MCF 10A (cell line): ENCODE measurements at regions of chr6 and their contacts with region 1.

Region 1: DNA sequence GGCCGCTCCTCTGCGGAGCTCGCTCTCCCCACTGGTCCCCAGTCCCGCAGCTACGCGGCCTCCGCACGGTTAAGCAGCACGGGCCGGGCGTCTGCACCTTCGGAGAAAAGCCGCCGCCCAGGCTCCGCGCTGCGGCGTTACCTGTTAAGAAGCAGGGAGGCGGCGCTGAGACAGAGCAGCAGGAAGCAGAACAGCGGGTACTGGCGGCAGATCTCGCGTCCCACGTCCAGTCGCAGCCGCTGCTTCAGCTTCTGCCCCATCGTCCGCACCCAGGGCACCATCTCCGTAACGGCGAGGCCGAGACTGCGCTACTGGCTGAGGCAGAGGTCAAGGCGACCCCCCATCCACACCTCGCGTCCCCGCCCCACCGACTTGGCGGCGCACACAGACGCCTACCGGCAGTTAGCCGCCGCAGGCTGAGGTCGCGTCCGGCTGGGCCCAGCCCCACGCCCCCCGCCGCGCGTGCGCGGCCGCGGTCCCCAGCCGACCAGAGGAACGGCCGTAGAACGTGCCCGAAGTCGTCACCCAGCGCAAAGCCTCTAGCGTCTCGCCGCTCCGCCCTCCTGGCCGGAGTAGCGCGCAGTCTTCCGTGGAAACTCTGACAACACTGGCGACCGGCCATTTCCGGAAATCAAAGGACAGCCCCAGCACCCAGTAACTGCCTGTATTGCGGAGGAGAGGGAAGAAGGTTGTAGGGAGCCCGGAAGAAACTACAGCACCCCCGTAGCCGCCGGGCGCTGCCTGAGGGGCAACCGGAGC is at the start of gene SNX14:
- DNase-seq: peak; percentile 96
- H3K4me3 Mint-ChIP-seq: peak within 1 kb of the TSS; percentile 91
- H3K27ac Mint-ChIP-seq: peak within 1 kb of the TSS; percentile 98
- H3K4me1 Mint-ChIP-seq: peaks cover 19% of the 10 kb centered on the region
- H3K27me3 Mint-ChIP-seq: no peaks in the 10 kb centered on the region
- CTCF ChIP-seq: no peak
- total RNA-seq, gene SNX14: 71.3 and 71.6 TPM in 2 replicates

Region 2: GRCh38 chr6:85360794-85361642 is 232.6 kb before region 1 on chr6:
- CTCF ChIA-PET with region 1: no interaction called
- POLR2A ChIA-PET with region 1: interaction called, 10 read pairs
- intact Hi-C with region 1: no loop called
- DNase-seq: peak; percentile 94
- H3K4me3 Mint-ChIP-seq: no peak overlapping the region
- H3K27ac Mint-ChIP-seq: peak overlapping the region; percentile 93
- H3K4me1 Mint-ChIP-seq: peaks cover 22% of the 10 kb centered on the region
- H3K27me3 Mint-ChIP-seq: no peaks in the 10 kb centered on the region
- CTCF ChIP-seq: no peak

Region 3: GRCh38 chr6:85404502-85405174 is 189.0 kb before region 1 on chr6:
- CTCF ChIA-PET with region 1: no interaction called
- POLR2A ChIA-PET with region 1: no interaction called
- intact Hi-C with region 1: loop called (anchors 5 kb)
- DNase-seq: peak; percentile 92
- H3K4me3 Mint-ChIP-seq: peak overlapping the region; percentile 48
- H3K27ac Mint-ChIP-seq: peak overlapping the region; percentile 93
- H3K4me1 Mint-ChIP-seq: peaks cover 49% of the 10 kb centered on the region
- H3K27me3 Mint-ChIP-seq: no peaks in the 10 kb centered on the region
- CTCF ChIP-seq: no peak

Region 4: DNA sequence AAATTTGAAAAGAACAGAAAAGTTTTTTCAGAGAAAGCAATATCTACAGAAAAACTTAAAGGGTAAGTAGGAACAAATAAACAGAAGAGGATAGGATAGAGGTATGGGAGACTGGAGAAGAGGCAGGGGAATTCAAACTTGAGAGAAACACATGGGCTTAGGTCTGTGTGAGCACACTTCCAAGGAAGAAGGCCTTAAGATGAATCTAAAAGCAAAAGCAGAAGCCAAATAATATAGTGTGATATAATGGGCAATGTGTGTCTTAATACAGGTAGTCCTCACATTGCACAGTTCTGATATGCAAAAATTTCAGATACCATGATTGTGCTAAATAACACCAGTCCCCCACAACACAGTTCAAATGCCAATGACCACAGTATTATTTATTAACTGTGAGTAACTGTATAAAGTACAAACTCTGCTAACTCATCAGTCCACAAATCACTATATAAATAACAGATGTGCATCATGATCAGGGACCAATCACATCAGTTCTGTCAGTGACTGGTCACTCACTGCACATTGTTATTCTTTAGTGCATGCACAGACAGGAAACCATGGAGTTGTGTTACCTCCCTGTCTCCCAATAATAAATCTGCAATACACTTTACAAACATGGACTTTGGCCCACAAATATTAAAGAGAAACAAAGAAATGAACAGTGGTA is 18.6 kb before region 1 on chr6:
- CTCF ChIA-PET with region 1: interaction called, 3 read pairs
- POLR2A ChIA-PET with region 1: interaction called, 23 read pairs
- intact Hi-C with region 1: no loop called
- DNase-seq: peak; percentile 56
- H3K4me3 Mint-ChIP-seq: no peak overlapping the region
- H3K27ac Mint-ChIP-seq: peak overlapping the region; percentile 77
- H3K4me1 Mint-ChIP-seq: peaks cover 23% of the 10 kb centered on the region
- H3K27me3 Mint-ChIP-seq: no peaks in the 10 kb centered on the region
- CTCF ChIP-seq: no peak

Region 5: DNA sequence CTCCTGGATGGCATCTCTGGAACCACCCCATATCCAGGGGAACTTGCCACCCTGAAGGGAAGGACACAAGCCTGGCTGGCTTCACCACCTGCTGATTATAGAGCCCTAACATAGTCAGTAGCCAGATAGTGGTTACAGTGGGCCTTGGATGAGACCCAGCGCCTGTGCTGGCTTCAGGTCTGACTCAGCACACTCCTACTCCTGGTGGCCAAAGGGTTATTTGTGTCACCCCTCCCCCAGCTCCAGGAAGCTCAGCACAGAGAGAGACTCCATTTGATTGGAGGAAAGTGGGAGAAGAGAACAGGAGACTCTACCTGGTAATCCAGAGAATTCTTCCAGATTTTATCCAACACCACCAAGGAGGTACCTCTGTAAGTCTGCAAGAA is 12.7 kb before region 1 on chr6:
- CTCF ChIA-PET with region 1: interaction called, 3 read pairs
- POLR2A ChIA-PET with region 1: interaction called, 23 read pairs
- intact Hi-C with region 1: no loop called
- DNase-seq: peak; percentile 77
- H3K4me3 Mint-ChIP-seq: no peak overlapping the region
- H3K27ac Mint-ChIP-seq: peak overlapping the region; percentile 72
- H3K4me1 Mint-ChIP-seq: peaks cover 33% of the 10 kb centered on the region
- H3K27me3 Mint-ChIP-seq: no peaks in the 10 kb centered on the region
- CTCF ChIP-seq: no peak

Region 6: DNA sequence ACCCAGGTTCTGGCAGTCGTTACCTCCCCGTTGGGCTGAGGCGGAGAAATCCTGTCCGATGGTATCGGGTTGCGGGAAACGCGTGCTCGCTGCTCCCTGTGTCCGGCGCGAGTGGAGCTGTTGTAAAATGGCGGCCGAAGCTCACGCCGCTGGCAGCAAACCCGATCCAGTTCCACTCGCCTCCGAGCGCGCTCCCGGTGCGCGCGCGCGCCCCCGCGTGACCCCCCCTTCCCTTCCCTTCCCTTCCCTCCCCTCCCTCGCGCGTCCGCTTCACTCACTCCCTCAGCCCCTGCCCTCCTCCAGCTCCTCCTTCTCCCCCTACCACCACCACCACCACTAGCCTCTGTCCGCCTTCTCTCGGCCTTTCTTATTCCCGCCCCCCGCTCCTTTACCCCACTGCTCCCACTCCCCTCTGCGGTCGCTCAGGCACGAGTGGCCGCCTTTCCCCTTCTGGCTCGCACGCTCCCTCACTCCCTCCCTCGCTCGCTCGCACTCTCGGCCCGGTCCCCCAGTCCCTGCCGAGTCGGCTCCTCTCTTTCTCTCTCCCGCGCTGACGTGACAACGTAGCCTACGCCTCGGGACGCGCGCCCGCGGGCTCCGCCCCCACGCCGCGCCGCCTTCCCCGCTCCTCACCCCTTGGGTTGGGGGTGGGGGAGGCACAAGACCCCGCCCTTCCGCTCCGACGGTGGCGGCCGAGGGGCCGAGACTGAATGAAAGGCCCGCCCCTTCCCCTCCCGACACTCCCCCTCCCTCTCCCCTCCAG is 49.3 kb after region 1 on chr6 and contains the start of gene SYNCRIP:
- CTCF ChIA-PET with region 1: no interaction called
- POLR2A ChIA-PET with region 1: interaction called, 116 read pairs
- intact Hi-C with region 1: loop called (anchors 5 kb)
- DNase-seq: peak; percentile 99
- H3K4me3 Mint-ChIP-seq: peak within 1 kb of the TSS; percentile 87
- H3K27ac Mint-ChIP-seq: peak within 1 kb of the TSS; percentile 99
- H3K4me1 Mint-ChIP-seq: peaks cover 38% of the 10 kb centered on the region
- H3K27me3 Mint-ChIP-seq: no peaks in the 10 kb centered on the region
- CTCF ChIP-seq: no peak
- total RNA-seq, gene SYNCRIP: 126 and 161 TPM in 2 replicates